Breast epithelium (tissue), 4 donors: ENCODE measurements at regions of chr5 and their contacts with region 1.

Region 1: GRCh38 chr5:179201986-179202385 is 141.8 kb downstream of the ZNF354C start:
- DNase-seq: no peak
- H3K4me3 ChIP-seq: no peak overlapping the region
- H3K27ac ChIP-seq: no peak overlapping the region
- H3K4me1 ChIP-seq: no peaks in the 10 kb centered on the region
- H3K27me3 ChIP-seq: no peaks in the 10 kb centered on the region
- CTCF ChIP-seq: no peak
- POLR2A ChIP-seq: no peak

Region 2: DNA sequence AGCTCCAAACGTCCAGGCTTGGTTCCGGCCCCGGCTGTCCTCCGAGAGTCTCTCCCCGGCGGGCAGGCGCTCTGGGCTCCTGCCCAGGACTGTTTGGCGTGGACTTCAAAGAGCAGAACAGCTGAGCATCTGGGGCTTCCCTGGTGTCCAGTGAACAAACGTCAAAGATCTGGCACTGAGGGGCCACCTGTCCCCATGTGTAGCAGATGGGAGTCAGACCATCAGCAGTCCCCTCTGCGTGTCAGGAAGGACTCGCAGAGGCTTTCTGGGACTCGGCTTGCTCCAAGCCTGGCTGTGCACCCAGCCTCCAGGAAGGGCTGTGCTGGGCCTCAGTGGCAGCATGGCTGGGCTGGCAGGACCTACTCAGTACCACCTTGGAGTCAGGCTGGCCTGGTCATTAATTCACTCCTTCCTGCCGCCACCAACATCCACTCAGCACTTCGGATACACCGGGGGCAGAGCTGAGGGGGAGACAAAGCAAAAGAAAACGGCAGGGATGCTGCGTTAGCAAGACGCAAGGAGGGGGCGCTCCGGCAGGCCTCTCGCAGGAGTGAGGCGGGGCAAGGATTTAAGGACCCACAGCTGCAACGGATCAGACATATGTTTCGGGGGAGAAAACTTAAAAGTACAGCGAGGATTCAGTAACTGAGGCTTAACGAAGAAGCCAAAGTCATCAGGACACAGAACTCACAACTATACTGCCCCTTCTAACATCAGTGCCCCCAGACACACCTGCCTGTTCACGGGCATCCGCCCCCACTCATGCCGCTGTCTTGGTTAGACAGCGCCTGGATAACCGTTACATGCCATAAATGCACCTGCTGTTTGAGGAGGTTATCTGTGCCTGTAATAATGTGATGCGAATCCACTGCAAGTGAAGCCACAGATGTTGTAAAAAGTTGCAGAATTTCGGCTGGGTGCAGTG is 804.9 kb before region 1 on chr5:
- intact Hi-C with region 1: no loop called
- DNase-seq: no peak
- H3K4me3 ChIP-seq: no peak overlapping the region
- H3K27ac ChIP-seq: no peak overlapping the region
- H3K4me1 ChIP-seq: no peaks in the 10 kb centered on the region
- H3K27me3 ChIP-seq: peaks cover 0 to 27% of the 10 kb centered on the region in 2 donors
- CTCF ChIP-seq: no peak
- POLR2A ChIP-seq: no peak

Region 3: GRCh38 chr5:179181988-179182387 is 20.0 kb before region 1 on chr5:
- intact Hi-C with region 1: loop called (anchors 1 kb)
- DNase-seq: peak in 1 of 2 donors; percentile 67
- H3K4me3 ChIP-seq: no peak overlapping the region
- H3K27ac ChIP-seq: peak overlapping the region in 1 of 2 donors; percentile 48
- H3K4me1 ChIP-seq: no peaks in the 10 kb centered on the region
- H3K27me3 ChIP-seq: peaks cover 0 to 10% of the 10 kb centered on the region in 2 donors
- CTCF ChIP-seq: no peak
- POLR2A ChIP-seq: no peak